ENCODE measurements at regions of chr2 and their contacts with region 1.

Region 1: DNA sequence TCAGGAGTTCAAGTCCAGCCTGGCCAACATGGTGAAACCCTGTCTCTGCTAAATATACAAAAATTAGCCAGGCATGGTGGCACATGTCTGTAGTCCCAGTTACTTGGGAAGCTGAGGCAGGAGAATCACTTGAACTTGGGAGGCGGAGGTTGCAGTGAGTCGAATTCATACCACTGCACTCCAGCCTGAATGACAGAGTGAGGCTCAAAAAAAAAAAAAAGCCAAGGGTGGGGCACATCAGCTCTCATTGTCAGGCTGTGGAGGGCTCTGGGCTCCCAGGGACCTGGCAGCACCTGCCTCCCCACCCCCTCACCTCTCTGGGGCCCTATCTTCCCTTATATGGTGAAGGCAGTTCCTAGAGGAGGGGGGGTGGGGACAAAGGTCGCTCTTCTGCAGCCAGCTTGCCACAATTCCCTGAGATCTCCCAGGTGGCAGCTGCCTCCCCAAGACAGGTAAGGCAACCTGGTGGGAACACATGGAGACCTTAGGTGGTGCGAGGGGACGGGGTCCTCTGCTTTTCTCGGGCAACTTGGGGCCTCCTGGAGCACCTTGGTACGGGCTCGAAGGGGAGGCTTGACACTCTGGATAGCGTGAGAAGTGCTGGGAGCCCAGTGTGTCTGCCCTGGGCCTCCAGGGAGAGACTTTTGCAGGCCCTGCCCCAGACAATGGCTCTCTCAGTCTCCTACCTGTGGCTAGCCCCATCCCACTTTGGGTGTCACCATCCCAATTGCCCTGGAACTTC is at the start of gene VIL1:
- DNase-seq: no peak
- ATAC-seq: no peak
- total RNA-seq, gene VIL1: not detected

Region 2: GRCh38 chr2:218466016-218466521 is 47.2 kb after region 1 on chr2:
- intact Hi-C with region 1: loop called (anchors 10 kb)
- DNase-seq: no peak
- ATAC-seq: peak; percentile 30